Panc1 (cell line): ENCODE measurements at regions of chr1 and their contacts with region 1.

Region 1: DNA sequence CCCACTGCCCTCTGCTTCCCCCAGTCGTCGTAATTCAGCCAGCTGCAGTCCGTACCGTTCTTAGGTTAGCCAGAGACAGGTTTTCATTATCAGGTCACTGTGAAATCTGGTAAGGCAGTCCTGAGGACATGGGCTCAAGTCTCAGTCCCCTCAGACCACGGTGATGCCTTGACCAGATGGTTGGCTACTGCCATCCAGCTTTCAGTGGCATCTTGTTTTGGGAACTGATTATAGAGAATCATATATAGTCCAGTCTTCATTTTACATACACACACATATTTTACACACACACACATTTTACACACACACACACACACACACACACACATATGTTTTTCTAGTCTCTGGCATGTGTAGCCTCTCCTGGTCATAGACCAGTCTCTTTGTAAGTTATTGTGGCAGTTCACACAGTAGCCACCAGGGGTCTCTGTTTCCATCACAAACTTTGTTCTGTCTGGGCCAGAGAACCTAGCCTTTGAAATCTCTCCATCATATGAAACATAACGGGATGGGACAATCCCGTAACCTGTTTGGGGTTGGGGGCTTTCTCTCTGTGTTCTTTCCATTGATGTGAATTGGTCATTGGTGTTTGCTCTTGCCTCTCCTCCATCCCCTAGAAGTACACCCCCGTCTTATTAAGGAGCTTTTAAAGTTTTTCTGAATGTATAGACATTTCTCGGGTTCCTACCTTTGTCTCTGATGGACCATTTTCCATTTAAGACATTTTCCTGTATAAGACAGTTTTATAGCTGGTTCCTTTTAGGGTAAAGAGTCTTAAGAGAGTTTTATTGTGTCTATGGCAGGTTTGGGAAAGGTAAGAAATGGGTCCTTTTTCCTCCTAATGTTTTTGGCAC is 8.4 kb upstream of the IKBKE start:
- DNase-seq: peak; percentile 36
- ATAC-seq: peak; percentile 93
- H3K4me3 ChIP-seq: no peak overlapping the region
- H3K27ac ChIP-seq: no peak overlapping the region
- H3K4me1 ChIP-seq: no peaks in the 10 kb centered on the region
- H3K27me3 ChIP-seq: no peaks in the 10 kb centered on the region
- CTCF ChIP-seq: peak; percentile 91

Region 2: DNA sequence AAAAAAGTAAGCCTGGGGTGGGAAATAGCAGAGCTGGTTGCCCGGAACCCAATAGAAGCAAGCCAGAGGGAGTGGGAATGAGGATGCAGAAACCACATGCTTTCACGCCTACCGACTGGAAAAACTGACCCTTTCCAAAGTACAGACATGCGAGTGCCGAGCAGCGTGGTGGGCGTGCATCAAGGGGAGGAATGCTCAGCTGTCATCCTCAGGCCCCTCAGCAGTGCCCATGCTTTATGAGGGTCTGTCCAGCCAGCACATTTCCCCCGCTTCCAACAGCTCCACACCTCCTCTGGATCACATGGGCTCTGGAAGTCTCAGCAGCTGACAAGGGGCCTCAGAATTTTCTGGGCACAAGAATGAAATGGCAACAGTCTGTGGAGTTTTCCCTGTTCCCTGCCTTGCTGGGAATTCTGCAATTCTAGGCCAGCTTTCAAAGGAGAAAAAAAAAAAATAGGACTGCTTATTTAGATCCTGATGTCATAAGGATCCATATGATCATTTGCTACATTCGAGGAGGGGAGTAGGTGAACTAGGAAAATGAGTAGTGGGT is 10.6 kb before region 1 on chr1:
- CTCF ChIA-PET with region 1: no interaction called
- POLR2A ChIA-PET with region 1: interaction called, 11 read pairs
- in situ Hi-C with region 1: no loop called
- intact Hi-C with region 1: no loop called
- DNase-seq: no peak
- ATAC-seq: no peak
- H3K4me3 ChIP-seq: no peak overlapping the region
- H3K27ac ChIP-seq: no peak overlapping the region
- H3K4me1 ChIP-seq: no peaks in the 10 kb centered on the region
- H3K27me3 ChIP-seq: no peaks in the 10 kb centered on the region
- CTCF ChIP-seq: no peak